ENCODE measurements at regions of chr3 and their contacts with region 1.

Region 1: DNA sequence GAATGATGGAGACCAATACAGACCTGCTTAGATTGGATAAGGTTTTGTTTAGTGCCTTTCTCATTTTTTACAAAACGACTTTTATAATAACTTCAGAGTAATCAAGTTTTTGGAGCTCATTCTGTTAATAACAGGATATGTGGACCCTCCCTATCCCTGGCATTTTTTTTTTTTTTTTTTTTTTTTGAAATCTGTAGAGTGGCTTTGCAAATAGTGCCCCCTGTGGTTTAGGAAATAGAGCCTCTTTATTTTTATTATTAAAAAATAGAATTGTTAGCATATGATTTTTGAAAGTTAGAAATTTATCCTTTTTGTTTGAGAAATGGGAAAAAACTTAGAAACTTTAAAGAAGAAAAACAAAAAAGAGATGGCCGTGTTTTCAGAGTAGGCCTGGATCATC is 11.4 kb downstream of the SKIL start:
- DNase-seq: no peak
- ATAC-seq: no peak
- H3K4me3 Mint-ChIP-seq: no peak overlapping the region
- H3K27ac Mint-ChIP-seq: no peak overlapping the region
- H3K4me1 Mint-ChIP-seq: peaks cover 28% of the 10 kb centered on the region
- H3K27me3 Mint-ChIP-seq: no peaks in the 10 kb centered on the region

Region 2: DNA sequence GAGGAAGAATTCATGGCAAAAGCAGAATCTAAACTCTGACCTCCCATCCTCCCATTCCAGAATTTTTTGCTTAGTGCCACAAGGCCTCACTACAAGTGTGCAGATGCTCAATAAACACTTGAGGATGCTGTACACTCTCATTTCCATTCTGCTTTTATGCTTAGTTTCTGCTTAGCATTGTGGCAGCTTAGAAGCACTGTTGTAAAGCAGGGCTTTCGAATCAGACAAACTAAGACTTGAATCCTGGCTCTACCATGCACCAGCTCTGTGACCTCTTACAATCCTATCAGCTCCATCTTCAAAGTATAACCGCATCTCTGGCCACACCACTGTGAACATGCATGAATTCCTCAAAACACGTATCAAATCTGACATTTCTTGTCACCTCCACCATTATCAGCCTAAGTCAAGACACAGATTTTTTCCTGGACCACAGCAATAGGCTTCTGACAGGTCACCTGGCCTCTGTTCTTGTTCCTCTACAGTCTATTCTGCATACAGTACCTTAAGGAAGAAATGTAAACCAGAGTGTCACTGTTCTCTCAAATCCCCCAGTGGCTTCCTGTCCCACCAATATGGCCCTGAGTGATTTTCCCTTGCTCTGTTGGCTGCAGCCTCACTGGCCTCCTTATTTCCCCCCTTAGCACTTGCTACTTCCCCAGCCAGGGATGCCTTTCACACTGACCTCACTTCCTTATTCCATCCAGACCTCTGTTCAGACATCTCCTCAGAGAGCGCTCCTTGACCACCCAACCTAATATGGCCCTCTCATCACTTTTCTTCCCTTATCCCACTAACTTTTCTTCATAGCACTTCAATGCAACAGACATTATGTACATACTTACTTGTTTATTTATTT is 179.3 kb before region 1 on chr3:
- CTCF ChIA-PET with region 1: no interaction called
- POLR2A ChIA-PET with region 1: no interaction called
- intact Hi-C with region 1: loop called in 1 of 2 experiments (anchors 1 kb)
- DNase-seq: no peak
- ATAC-seq: peak; percentile 17
- H3K4me3 Mint-ChIP-seq: no peak overlapping the region
- H3K27ac Mint-ChIP-seq: no peak overlapping the region
- H3K4me1 Mint-ChIP-seq: peaks cover 7% of the 10 kb centered on the region
- H3K27me3 Mint-ChIP-seq: no peaks in the 10 kb centered on the region

Region 3: GRCh38 chr3:170338690-170339340 is 30.1 kb before region 1 on chr3:
- CTCF ChIA-PET with region 1: no interaction called
- POLR2A ChIA-PET with region 1: no interaction called
- intact Hi-C with region 1: no loop called
- DNase-seq: no peak
- ATAC-seq: no peak
- H3K4me3 Mint-ChIP-seq: no peak overlapping the region
- H3K27ac Mint-ChIP-seq: no peak overlapping the region
- H3K4me1 Mint-ChIP-seq: no peaks in the 10 kb centered on the region
- H3K27me3 Mint-ChIP-seq: no peaks in the 10 kb centered on the region

Region 4: GRCh38 chr3:171088496-171088895 is 719.6 kb after region 1 on chr3:
- CTCF ChIA-PET with region 1: no interaction called
- POLR2A ChIA-PET with region 1: interaction called, 10 read pairs
- intact Hi-C with region 1: no loop called
- DNase-seq: no peak
- ATAC-seq: no peak
- H3K4me3 Mint-ChIP-seq: no peak overlapping the region
- H3K27ac Mint-ChIP-seq: no peak overlapping the region
- H3K4me1 Mint-ChIP-seq: no peaks in the 10 kb centered on the region
- H3K27me3 Mint-ChIP-seq: no peaks in the 10 kb centered on the region

Measured in activated CD4-positive, alpha-beta T cell treated with anti-CD3 and anti-CD28 coated beads for 36 hours (primary cell).